ENCODE measurements at regions of chr1 and their contacts with region 1.

Region 1: DNA sequence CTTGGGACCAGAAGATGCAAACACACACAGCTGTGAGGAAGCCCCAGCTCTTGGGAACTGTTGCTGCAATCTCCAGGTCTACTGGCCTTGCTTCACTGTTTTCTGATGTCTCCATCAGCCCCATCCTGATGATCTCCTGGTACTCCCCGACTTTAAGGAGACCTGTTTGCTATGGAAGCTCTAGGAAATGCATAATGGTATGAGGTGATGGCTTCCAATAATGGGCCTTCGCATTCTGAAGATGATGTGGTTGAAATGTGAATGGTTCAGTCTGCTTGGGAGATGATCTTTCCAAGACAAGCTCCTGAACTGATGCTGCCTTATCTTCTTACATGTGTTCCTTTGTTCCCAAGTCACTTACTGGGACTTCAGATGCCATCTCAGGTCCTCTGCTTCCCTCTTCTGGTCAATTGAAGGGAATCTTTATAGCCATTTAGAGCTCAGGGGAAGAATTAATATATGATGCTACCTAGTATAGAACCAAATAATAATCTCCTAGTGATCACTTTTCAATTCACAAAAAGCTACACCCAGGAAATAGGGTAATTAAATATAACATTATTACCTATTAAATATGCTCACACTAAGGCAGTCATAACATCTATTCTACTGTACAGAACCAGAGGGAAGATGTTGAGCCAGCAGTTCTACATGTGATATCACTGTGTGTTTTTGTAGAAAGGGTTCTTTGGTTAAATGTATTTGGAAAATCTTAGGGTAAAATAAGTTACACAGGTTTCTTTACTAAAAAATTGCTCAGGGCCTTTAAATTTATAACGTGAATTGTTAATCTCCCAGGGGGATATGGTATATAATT is 73.9 kb upstream of the VTCN1 start:
- DNase-seq: no peak
- ATAC-seq: peak; percentile 51 to 70
- H3K4me3 ChIP-seq: no peak overlapping the region
- H3K27ac ChIP-seq: no peak overlapping the region
- H3K4me1 ChIP-seq: no peaks in the 10 kb centered on the region
- H3K27me3 ChIP-seq: no peaks in the 10 kb centered on the region

Region 2: GRCh38 chr1:116853670-116854402 is 430.8 kb before region 1 on chr1:
- intact Hi-C with region 1: no loop called
- DNase-seq: no peak
- ATAC-seq: peak in 1 of 2 donors; percentile 49
- H3K4me3 ChIP-seq: no peak overlapping the region
- H3K27ac ChIP-seq: no peak overlapping the region
- H3K4me1 ChIP-seq: peaks cover 5% of the 10 kb centered on the region
- H3K27me3 ChIP-seq: no peaks in the 10 kb centered on the region

Region 3: GRCh38 chr1:117067533-117068370 is 216.9 kb before region 1 on chr1:
- intact Hi-C with region 1: loop called in 3 of 4 experiments (anchors 5 kb)
- DNase-seq: peak in 1 of 3 donors; percentile 62
- ATAC-seq: peak; percentile 86 to 90
- H3K4me3 ChIP-seq: no peak overlapping the region
- H3K27ac ChIP-seq: no peak overlapping the region
- H3K4me1 ChIP-seq: no peaks in the 10 kb centered on the region
- H3K27me3 ChIP-seq: no peaks in the 10 kb centered on the region

Region 4: DNA sequence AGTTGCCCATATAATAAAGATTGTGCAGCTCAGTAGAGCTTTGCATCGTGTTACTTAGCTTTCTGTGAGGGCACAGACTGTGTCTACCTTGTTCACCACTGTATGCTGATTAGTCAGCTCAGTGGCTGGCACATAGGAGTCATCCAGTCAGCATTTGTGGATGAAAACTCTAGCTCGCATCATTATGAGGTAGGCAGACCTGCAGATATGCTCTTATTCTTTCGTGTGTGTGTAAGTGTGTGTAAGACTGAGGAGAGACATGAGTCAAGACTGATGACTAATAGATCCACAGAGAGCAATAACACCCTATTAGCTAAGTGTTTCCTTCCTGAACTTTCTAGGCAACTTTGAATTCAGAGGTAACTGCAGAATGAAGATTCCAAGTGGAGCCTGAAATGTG is 207.3 kb before region 1 on chr1:
- intact Hi-C with region 1: loop called in 1 of 4 experiments (anchors 10 kb)
- DNase-seq: no peak
- ATAC-seq: no peak
- H3K4me3 ChIP-seq: no peak overlapping the region
- H3K27ac ChIP-seq: no peak overlapping the region
- H3K4me1 ChIP-seq: no peaks in the 10 kb centered on the region
- H3K27me3 ChIP-seq: no peaks in the 10 kb centered on the region

Region 5: DNA sequence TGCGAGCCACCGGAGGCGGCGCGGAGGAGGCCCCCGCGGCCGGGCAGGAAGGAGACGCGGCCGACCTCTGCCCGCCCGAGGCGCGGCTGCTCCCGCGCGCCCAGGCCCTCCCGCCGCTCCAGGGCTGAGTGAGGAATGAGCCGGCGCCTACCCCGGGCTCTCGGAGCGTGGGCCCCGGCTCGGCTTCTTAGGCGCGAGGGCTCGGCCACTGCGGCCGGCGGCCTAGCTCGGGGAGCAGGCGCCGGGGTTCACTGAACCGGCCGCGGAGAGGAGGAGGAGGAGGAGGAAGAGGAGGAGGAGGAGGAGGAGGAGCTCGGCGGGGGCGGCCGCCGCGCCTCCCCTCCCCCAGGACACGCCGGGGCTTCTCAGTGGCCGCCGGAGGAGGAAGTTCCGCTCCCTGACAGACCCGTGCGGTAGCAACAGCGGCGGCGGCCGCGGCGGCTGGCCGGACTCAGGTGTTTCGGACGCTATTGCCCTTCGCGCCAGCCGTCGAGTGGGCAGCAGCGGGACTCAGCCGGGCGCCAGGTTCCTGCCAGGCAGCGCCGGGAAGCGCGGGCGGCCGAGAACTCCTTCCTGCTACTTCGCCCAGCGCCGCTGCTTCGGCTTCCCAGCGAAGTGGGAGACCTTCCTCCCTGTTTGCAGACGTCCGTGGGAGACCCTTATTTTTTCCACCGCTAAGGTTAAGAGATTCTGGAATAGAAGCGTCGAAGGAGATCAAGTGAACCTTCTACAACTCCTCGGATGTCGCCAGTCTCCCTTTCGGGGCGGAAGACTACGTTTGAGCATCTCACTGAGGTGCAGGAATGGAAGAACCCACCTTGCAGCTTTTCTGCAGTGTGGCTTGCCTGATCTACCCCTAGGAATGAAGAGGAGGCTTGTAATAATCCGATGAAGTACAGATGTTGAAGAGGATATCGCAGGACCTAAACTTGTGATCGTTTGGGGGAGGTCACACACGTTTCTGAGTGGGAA is 82.7 kb after region 1 on chr1 and contains the start of gene MAN1A2:
- intact Hi-C with region 1: no loop called
- DNase-seq: peak; percentile 91 to 96 (median 96)
- ATAC-seq: peak; percentile 96 to 97
- H3K4me3 ChIP-seq: peak within 1 kb of the TSS; percentile 75
- H3K27ac ChIP-seq: peak within 1 kb of the TSS; percentile 90
- H3K4me1 ChIP-seq: peaks cover 9% of the 10 kb centered on the region
- H3K27me3 ChIP-seq: no peaks in the 10 kb centered on the region
- total RNA-seq, gene MAN1A2: 38.1 to 49.0 (median 45.5) TPM